Activated T-helper 2 cell treated with anti-CD3 and anti-CD28 coated beads, Interferon-gamma antibody, Interleukin-2, Interleukin-4, amounts not matched to agents 10 μg/mL and 5 μg/mL and 100 μg/mL, durations not matched to agents 14 hours and 24 hours and 36 hours (primary cell): ENCODE measurements at regions of chr16 and their contacts with region 1.

Region 1: GRCh38 chr16:11051879-11052808 is 107.8 kb downstream of the CLEC16A start:
- DNase-seq: peak; percentile 83
- H3K4me3 Mint-ChIP-seq: peak overlapping the region; percentile 43
- H3K27ac Mint-ChIP-seq: peak overlapping the region; percentile 92
- H3K4me1 Mint-ChIP-seq: peaks cover 85% of the 10 kb centered on the region
- H3K27me3 Mint-ChIP-seq: no peaks in the 10 kb centered on the region

Region 2: GRCh38 chr16:10957771-10958486 is 94.2 kb before region 1 on chr16:
- intact Hi-C with region 1: loop called (anchors 1 kb)
- DNase-seq: no peak
- H3K4me3 Mint-ChIP-seq: peak overlapping the region; percentile 32
- H3K27ac Mint-ChIP-seq: peak overlapping the region; percentile 87
- H3K4me1 Mint-ChIP-seq: peaks cover 74% of the 10 kb centered on the region
- H3K27me3 Mint-ChIP-seq: no peaks in the 10 kb centered on the region

Region 3: GRCh38 chr16:10981697-10982216 is 70.4 kb before region 1 on chr16:
- intact Hi-C with region 1: no loop called
- DNase-seq: peak; percentile 45
- H3K4me3 Mint-ChIP-seq: peak overlapping the region; percentile 62
- H3K27ac Mint-ChIP-seq: peak overlapping the region; percentile 74
- H3K4me1 Mint-ChIP-seq: peaks cover 72% of the 10 kb centered on the region
- H3K27me3 Mint-ChIP-seq: no peaks in the 10 kb centered on the region

Region 4: DNA sequence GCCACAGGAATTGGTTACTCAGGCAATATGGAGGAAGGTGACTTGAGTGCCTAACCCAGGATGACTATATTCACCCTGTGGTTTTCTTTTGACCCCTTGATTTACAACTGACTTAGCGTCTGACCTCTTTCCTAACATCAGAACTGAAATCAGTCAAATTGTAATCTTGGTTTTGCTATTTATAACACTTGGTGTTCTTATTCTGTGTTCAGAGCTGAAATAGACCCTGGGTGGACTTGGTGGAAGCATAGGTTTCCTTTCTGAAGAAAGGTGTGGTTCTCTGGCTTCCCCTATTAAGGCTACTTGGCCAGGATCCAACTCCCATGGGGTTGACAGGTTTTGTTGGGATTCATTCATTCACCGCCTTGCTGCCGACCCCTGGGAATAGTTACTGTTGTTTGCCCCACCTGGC is 27.0 kb before region 1 on chr16:
- intact Hi-C with region 1: loop called (anchors 1 kb)
- DNase-seq: no peak
- H3K4me3 Mint-ChIP-seq: no peak overlapping the region
- H3K27ac Mint-ChIP-seq: peak overlapping the region; percentile 92
- H3K4me1 Mint-ChIP-seq: peaks cover 42% of the 10 kb centered on the region
- H3K27me3 Mint-ChIP-seq: no peaks in the 10 kb centered on the region

Region 5: DNA sequence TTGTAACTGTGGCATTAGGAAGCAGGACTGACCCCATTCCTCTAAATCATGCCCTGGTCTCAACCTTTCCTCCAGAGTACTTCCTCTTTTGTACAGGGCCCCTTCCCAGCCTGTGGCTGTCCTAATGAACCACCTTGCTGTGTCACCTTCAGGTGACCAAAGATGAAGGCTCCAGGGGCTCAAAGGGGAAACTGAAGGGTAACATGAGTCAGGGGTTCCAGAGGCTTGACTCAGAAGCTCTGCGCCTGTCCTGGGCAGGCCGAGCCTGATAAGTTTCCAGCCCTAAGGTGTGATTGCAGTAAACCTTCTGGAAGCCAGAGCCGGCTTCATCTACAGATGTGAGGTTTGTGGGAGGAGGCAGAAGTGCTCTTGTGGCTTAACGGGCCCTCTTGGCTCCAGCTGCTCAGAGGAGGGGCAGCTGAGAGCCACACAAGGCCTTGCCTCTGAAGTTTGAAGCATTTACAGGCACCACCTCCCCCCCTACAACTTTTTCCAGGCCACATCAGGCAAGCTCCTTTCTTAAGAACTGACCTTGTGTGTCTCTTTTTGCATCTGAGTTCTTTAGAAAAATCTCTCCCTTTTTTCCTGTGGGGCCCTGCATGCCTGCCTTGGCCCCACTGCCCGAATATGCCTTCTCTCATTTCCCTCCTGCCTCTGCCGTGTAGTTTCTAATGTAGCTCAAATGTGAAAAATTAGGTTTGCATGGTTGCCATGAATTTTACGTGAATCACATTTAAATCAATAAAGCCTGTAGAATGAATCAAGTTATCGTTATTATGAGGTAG is 42.1 kb after region 1 on chr16:
- intact Hi-C with region 1: loop called (anchors 1 kb)
- DNase-seq: peak; percentile 67
- H3K4me3 Mint-ChIP-seq: peak overlapping the region; percentile 50
- H3K27ac Mint-ChIP-seq: peak overlapping the region; percentile 98
- H3K4me1 Mint-ChIP-seq: peaks cover 75% of the 10 kb centered on the region
- H3K27me3 Mint-ChIP-seq: no peaks in the 10 kb centered on the region

Region 6: DNA sequence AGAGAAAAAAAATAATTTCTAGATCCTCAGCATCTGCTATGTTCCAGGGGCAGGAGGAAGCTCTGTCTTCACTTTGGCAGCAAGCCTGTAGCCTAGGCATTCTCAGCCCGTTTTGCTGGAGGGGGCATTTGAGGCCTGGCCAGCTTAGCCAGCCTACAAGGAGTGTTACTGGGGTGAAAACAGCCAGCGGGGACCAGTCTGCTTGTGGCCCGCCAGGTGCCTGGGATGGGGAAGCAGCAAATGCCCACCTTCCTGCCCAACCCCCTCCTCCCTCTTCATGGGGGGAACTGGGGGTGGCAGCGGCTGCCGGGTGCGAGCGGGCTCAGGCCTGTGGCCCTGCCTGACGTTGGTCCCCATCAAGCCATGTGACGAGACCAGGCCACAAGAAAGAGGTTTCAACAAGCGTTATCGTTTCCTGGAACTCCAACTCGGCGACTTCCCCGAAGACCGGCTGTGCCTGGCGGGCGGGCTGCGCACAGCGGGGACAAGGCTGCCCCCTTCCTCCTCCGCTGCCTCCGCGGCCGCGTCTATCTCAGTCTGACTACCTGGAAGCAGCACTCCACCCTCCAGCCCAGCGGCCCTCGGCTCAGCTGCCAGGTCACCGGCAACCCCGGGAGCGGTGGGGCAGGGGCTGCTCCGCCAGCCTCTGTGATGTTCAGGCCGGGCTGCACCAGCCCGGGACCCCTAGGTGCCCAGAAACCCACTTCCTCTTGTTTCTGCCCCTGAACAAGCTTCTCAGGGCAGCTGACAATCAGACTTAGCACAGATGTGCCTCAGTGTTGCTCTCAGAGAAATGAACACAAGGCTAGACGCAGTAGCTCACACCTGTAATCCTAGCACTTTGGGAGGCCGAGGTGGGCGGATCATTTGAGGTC is 180.9 kb after region 1 on chr16:
- intact Hi-C with region 1: loop called (anchors 1 kb)
- DNase-seq: peak; percentile 91
- H3K4me3 Mint-ChIP-seq: peak overlapping the region; percentile 56
- H3K27ac Mint-ChIP-seq: peak overlapping the region; percentile 98
- H3K4me1 Mint-ChIP-seq: peaks cover 76% of the 10 kb centered on the region
- H3K27me3 Mint-ChIP-seq: no peaks in the 10 kb centered on the region